ENCODE measurements at regions of chr19 and their contacts with region 1.

Region 1: GRCh38 chr19:35066691-35067563 is 25.4 kb downstream of the HPN start:
- DNase-seq: peak; percentile 74 to 91 (median 87)
- ATAC-seq: peak; percentile 95
- H3K4me3 ChIP-seq: no peak overlapping the region
- H3K4me3 Mint-ChIP-seq: peak overlapping the region in 2 of 10 donors; percentile 3 to 24
- H3K27ac ChIP-seq: no peak overlapping the region
- H3K27ac Mint-ChIP-seq: peak overlapping the region in 6 of 9 donors; percentile 8 to 80 (median 49)
- H3K4me1 ChIP-seq: no peaks in the 10 kb centered on the region
- H3K4me1 Mint-ChIP-seq: peaks cover 0 to 13% (median 7%) of the 10 kb centered on the region in 7 donors
- H3K27me3 ChIP-seq: no peaks in the 10 kb centered on the region
- H3K27me3 Mint-ChIP-seq: no peaks in the 10 kb centered on the region

Region 2: GRCh38 chr19:35013031-35013819 is 53.7 kb before region 1 on chr19:
- CTCF ChIA-PET with region 1: no interaction called
- POLR2A ChIA-PET with region 1: no interaction called
- intact Hi-C with region 1: no loop called
- DNase-seq: peak; percentile 73 to 87 (median 79)
- ATAC-seq: peak; percentile 83
- H3K4me3 ChIP-seq: peak overlapping the region; percentile 48
- H3K4me3 Mint-ChIP-seq: peak overlapping the region; percentile 76 to 94 (median 86)
- H3K27ac ChIP-seq: peak overlapping the region; percentile 75
- H3K27ac Mint-ChIP-seq: peak overlapping the region; percentile 76 to 99 (median 96)
- H3K4me1 ChIP-seq: peaks cover 57 to 59% of the 10 kb centered on the region in 2 donors
- H3K4me1 Mint-ChIP-seq: peaks cover 41 to 83% (median 67%) of the 10 kb centered on the region in 7 donors
- H3K27me3 ChIP-seq: no peaks in the 10 kb centered on the region
- H3K27me3 Mint-ChIP-seq: no peaks in the 10 kb centered on the region

Region 3: GRCh38 chr19:35044317-35045117 is 22.4 kb before region 1 on chr19:
- CTCF ChIA-PET with region 1: interaction called, 4 read pairs
- POLR2A ChIA-PET with region 1: interaction called, 3 read pairs
- intact Hi-C with region 1: loop called in 1 of 2 experiments (anchors 2 kb)
- DNase-seq: peak in 7 of 9 donors; percentile 36 to 68 (median 50)
- ATAC-seq: peak; percentile 46
- H3K4me3 ChIP-seq: no peak overlapping the region
- H3K4me3 Mint-ChIP-seq: peak overlapping the region in 5 of 10 donors; percentile 24 to 49 (median 29)
- H3K27ac ChIP-seq: no peak overlapping the region
- H3K27ac Mint-ChIP-seq: peak overlapping the region in 6 of 9 donors; percentile 40 to 88 (median 68)
- H3K4me1 ChIP-seq: peaks cover 15 to 16% of the 10 kb centered on the region in 2 donors
- H3K4me1 Mint-ChIP-seq: peaks cover 30 to 43% (median 38%) of the 10 kb centered on the region in 7 donors
- H3K27me3 ChIP-seq: no peaks in the 10 kb centered on the region
- H3K27me3 Mint-ChIP-seq: peaks cover 0 to 29% (median 10%) of the 10 kb centered on the region in 5 donors

Region 4: DNA sequence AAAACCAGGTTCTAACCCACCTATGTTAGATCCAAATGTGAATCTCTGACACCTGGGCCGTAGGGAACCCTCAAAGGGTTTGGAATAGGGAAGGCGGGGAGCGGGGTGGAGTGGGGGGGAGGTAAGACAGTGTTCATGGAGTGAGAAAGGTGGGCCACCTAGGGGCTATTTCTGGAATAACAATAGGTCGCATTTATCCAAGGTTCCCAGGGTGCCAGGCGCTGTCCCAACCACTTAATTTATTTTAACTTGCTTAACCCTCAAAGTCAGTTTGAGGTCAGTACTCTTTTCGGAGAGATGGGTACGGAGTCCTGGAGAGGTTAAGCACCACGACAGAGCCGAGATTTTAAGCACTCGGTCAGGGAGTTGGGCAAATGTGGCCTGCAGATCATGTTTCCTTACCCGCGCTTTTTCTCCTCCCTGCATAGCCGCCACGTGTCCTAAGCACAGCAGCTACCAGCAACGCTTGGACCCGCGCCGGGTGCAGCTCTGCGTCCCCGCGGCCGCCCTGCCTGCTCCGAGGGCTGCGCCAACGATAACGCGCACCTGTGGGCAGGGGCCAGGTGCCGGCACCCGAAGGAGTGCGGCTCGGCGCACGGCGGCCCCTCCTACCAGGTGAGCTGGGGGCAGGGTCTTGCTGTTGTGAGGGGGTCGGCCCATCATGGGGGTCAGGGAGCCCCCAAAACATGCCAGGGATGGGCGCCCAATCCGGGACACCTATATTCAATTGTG is 23.7 kb after region 1 on chr19:
- CTCF ChIA-PET with region 1: interaction called, 6 read pairs
- POLR2A ChIA-PET with region 1: no interaction called
- intact Hi-C with region 1: loop called in 1 of 2 experiments (anchors 1 kb)
- DNase-seq: peak in 7 of 9 donors; percentile 13 to 43 (median 30)
- ATAC-seq: peak; percentile 80
- H3K4me3 ChIP-seq: no peak overlapping the region
- H3K4me3 Mint-ChIP-seq: peak overlapping the region in 4 of 10 donors; percentile 23 to 56 (median 30)
- H3K27ac ChIP-seq: no peak overlapping the region
- H3K27ac Mint-ChIP-seq: no peak overlapping the region
- H3K4me1 ChIP-seq: peaks cover 7 to 16% of the 10 kb centered on the region in 2 donors
- H3K4me1 Mint-ChIP-seq: peaks cover 0 to 10% (median 4%) of the 10 kb centered on the region in 7 donors
- H3K27me3 ChIP-seq: no peaks in the 10 kb centered on the region
- H3K27me3 Mint-ChIP-seq: peaks cover 0 to 10% (median 3%) of the 10 kb centered on the region in 5 donors

Region 5: GRCh38 chr19:35135389-35135909 is 68.5 kb after region 1 on chr19:
- CTCF ChIA-PET with region 1: interaction called, 7 read pairs
- POLR2A ChIA-PET with region 1: no interaction called
- intact Hi-C with region 1: loop called (anchors 1 kb)
- DNase-seq: peak in 8 of 9 donors; percentile 41 to 74 (median 51)
- ATAC-seq: peak; percentile 88
- H3K4me3 ChIP-seq: no peak overlapping the region
- H3K4me3 Mint-ChIP-seq: no peak overlapping the region
- H3K27ac ChIP-seq: no peak overlapping the region
- H3K27ac Mint-ChIP-seq: no peak overlapping the region
- H3K4me1 ChIP-seq: peaks cover 0 to under 1% of the 10 kb centered on the region in 2 donors
- H3K4me1 Mint-ChIP-seq: peaks cover 4 to 13% (median 6%) of the 10 kb centered on the region in 7 donors
- H3K27me3 ChIP-seq: no peaks in the 10 kb centered on the region
- H3K27me3 Mint-ChIP-seq: peaks cover 0 to 11% (median 0%) of the 10 kb centered on the region in 5 donors

Region 6: DNA sequence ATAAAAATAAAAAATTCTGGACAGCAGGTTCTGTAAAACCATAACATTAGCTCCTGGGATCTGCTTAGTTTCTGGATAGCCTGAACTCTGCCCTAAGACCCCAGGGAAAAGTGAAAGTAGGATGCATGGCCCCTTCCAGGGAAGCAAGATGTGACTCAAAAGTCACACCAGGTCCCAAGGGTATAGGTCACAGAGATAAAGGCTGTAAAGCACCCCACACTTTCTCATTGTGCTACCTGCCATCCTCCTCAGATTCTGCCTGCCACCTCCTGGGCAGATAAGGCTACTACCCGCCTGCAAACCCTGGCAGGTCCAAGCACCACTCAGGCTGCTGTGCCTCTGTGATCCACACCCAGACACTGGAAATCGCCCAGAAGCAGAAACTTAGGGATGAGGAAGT is 401.7 kb after region 1 on chr19:
- CTCF ChIA-PET with region 1: no interaction called
- POLR2A ChIA-PET with region 1: no interaction called
- intact Hi-C with region 1: loop called in 1 of 2 experiments (anchors 1 kb)
- DNase-seq: peak; percentile 30 to 66 (median 57)
- ATAC-seq: peak; percentile 99
- H3K4me3 ChIP-seq: no peak overlapping the region
- H3K4me3 Mint-ChIP-seq: no peak overlapping the region
- H3K27ac ChIP-seq: no peak overlapping the region
- H3K27ac Mint-ChIP-seq: no peak overlapping the region
- H3K4me1 ChIP-seq: peaks cover 0 to 10% of the 10 kb centered on the region in 2 donors
- H3K4me1 Mint-ChIP-seq: peaks cover 4 to 9% (median 7%) of the 10 kb centered on the region in 7 donors
- H3K27me3 ChIP-seq: no peaks in the 10 kb centered on the region
- H3K27me3 Mint-ChIP-seq: peaks cover 0 to 8% (median 0%) of the 10 kb centered on the region in 5 donors

Region 7: GRCh38 chr19:35495107-35496064 is 428.5 kb after region 1 on chr19:
- CTCF ChIA-PET with region 1: no interaction called
- POLR2A ChIA-PET with region 1: no interaction called
- intact Hi-C with region 1: loop called (anchors 1 to 10 kb)
- DNase-seq: peak; percentile 38 to 81 (median 60)
- ATAC-seq: peak; percentile 99
- H3K4me3 ChIP-seq: no peak overlapping the region
- H3K4me3 Mint-ChIP-seq: peak overlapping the region in 7 of 10 donors; percentile 17 to 62 (median 45)
- H3K27ac ChIP-seq: no peak overlapping the region
- H3K27ac Mint-ChIP-seq: peak overlapping the region in 3 of 9 donors; percentile 22 to 62 (median 47)
- H3K4me1 ChIP-seq: no peaks in the 10 kb centered on the region
- H3K4me1 Mint-ChIP-seq: peaks cover 0 to 9% (median 6%) of the 10 kb centered on the region in 7 donors
- H3K27me3 ChIP-seq: no peaks in the 10 kb centered on the region
- H3K27me3 Mint-ChIP-seq: peaks cover 0 to 12% (median 0%) of the 10 kb centered on the region in 5 donors